ENCODE measurements at regions of chr1 and their contacts with region 1.

Region 1: DNA sequence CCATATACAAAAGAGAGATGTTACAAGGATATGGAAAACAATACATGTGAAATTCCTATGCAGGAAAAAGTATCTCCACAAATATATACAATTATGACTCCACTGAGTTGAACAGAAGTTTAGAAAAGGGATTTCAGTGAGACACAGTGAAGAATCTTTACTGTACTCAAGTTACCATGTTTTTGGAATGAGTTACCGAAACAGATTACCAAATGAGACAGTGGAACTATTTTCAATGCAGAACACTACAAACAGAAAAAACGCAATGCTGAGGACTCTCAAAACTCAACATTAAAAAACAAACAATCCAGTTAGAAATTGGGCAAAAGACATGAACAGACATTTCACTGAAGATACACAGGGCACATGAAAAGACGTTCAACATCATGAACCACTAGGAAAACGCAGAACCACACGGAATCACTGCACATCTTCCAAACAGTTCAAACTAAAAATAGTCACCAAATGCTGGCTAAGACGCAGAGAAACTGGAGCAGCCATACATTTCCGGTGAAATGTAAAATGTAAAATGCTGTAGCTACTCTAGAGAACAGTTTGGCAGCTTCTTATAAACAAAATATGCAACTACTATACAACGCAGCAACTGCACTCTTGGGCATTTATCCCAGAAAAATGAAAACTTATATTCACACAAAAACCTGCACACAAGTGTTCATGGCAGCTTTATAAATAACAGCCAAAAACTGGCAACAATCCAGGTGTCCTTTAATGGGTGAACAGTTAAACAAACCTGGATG is 118.7 kb downstream of the UBR4 start:
- DNase-seq: no peak

Region 2: DNA sequence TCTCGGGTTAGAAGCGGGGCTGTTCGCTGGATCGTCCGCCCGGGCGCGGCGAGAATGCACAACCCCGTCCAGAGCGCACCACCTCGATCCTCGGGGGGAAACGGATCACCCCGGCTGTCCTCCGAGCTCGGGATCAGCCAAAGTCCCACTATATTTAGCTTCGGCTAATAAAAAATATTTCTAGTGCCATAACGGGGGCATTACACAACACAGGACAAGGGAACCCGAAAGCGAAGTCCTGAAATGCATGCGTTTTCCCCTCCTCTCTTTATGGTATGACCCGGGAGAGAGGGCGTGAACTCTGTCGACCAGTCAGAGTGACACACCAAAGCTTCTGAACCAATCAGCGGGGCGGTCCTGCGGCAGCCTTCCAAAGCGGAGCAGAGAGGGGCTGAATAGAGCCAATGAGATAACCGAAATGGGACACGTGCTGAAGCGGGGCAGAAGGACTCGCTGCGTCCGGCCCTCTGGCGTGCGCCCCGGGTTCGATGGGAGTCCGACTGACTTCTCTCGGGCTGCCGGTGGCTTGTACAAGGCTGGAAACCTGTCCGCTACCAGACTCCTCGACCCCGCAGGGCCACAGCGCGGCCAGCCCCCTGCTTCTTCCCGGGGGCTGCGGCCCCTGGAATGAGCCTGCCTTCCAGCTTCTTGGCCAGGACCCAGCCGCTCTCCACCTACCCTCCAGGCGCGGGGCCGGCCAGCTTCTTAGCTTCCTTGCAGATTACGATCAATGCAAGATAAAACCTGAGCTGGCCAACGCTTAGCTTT is 188.7 kb before region 1 on chr1 and contains the start of gene ALDH4A1:
- intact Hi-C with region 1: loop called in 1 of 2 experiments (anchors 5 kb)
- DNase-seq: peak; percentile 99
- total RNA-seq, gene ALDH4A1: 8.5 to 17.0 TPM

Region 3: DNA sequence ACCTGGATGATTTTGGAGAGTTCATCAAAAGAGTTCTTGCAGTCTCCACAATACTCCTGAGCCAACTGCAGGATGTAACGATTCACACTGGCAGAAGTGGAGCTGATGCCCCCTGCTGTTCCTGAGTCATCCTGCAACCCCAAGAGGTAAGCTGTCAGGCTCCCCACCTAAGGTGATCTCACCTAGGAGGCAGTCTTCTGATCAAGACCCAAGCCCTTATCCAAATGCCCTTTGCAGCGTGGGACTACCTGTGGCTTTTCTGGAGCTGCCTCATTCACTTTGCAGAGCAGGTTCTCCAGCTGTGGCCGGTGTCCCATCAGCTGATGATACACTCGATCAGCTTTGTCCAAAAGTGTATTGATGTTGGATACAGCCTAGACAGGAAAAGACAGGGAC is 22.3 kb after region 1 on chr1:
- intact Hi-C with region 1: loop called in 1 of 2 experiments (anchors 1 kb)
- DNase-seq: no peak